HEK293T (cell line): ENCODE measurements at regions of chr6 and their contacts with region 1.

Region 1: GRCh38 chr6:30102970-30103874 is 9.7 kb downstream of the TRIM31 start:
- DNase-seq: peak; percentile 86

Region 2: DNA sequence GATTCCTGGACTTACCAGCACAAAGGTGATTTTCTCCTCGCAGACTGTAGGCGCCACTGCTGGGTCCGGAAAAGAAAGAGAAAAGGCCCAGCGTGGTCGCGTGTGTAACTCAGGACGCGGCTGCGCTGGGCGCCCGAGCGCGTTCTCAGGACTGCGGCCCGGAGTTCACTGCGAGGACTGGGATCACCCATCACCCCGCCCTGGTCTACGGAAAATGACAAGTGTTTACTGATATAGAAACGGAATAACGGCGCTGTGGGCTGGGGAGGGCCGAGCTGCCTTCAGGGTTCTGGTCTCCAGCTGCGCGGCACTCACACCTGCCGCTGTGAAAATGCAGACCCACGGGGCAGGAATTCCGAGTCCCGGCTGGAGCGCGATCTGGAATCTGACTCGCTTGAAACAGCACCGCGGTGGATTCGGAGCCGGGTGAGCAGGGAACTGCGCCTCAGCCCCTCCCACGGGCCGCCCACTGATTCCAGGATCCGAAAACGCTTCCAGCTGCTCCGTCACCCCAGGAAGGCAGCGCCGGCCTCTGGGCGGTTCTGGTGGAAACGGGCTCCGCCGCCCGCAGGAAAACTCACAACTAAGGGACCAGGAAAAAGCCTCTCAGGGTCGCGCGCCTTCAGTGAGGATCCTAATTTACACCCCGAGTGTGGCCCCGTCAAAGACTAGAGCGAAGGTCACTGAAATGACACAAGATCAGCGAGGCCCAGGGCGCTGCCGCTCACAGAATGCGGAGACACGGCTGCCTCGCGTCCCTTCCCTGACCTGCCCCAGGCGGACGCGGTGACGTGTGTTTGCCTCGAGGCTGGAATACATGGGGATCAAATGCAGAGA is 126.4 kb before region 1 on chr6:
- CTCF ChIA-PET with region 1: no interaction called
- POLR2A ChIA-PET with region 1: no interaction called
- DNase-seq: peak; percentile 62

Region 3: GRCh38 chr6:30061092-30061857 is 41.9 kb before region 1 on chr6 and contains the start of gene POLR1H:
- CTCF ChIA-PET with region 1: no interaction called
- POLR2A ChIA-PET with region 1: interaction called, 20 read pairs
- DNase-seq: peak; percentile 93

Region 4: DNA sequence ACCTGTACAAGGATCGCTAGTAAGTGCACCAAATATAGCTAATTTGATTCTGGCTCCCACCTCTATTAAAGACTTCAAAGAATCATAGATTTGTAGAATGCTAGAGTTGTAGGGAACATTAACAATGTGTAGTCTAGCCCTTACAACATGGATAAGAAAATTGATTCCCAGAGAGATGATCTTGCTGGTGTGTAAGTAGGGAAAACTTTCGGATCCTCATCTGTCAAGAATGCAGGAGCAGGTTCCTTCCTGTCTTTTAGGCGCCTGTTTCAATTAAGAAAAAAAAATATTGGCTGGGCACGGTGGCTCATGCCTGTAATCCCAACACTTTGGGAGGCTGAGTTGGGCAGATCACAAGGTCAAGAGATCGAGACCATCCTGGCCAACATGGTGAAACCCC is 15.3 kb before region 1 on chr6:
- CTCF ChIA-PET with region 1: interaction called, 5 read pairs
- POLR2A ChIA-PET with region 1: interaction called, 11 read pairs
- DNase-seq: no peak

Region 5: GRCh38 chr6:30130887-30131862 is 28.0 kb after region 1 on chr6:
- CTCF ChIA-PET with region 1: interaction called, 66 read pairs
- POLR2A ChIA-PET with region 1: interaction called, 22 read pairs
- DNase-seq: peak; percentile 85